MCF 10A (cell line): ENCODE measurements at regions of chr5 and their contacts with region 1.

Region 1: DNA sequence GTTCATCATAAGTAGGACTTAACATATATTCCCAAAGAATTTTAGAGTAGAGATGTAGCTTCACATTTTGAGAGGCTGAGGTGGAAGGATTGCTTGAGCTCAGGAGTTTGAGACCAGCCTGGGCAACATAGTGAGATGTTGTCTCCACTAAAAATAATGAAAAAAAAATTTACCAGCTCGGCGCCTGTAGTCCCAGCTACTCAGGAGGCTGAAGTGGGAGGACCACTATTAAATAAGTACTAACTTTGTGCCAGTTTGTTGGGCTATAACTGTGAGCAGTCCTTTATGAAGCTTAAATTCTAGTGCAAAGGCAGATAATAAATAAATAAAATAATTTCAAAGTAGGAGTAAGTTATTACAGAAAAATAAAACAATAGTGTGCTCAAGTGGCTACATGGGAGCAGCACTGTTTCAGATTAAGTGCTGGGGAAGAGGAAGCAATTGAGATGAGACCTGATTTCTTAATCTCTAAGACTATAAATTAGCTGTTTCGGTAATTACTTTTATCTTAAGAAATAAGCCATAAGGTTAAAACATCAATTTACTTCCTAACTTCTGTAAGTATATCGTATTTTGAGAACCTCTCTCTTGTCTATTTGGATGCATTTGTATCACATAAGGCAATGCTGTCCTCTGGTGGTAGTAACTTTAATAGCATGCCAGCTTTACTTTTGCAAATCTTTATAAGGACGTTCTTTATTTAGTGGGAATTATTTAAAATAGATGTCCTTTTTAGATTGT is 98.9 kb downstream of the CSNK1G3 start:
- DNase-seq: peak; percentile 76
- H3K4me3 Mint-ChIP-seq: no peak overlapping the region
- H3K27ac Mint-ChIP-seq: no peak overlapping the region
- H3K4me1 Mint-ChIP-seq: no peaks in the 10 kb centered on the region
- H3K27me3 Mint-ChIP-seq: no peaks in the 10 kb centered on the region
- CTCF ChIP-seq: peak; percentile 96

Region 2: DNA sequence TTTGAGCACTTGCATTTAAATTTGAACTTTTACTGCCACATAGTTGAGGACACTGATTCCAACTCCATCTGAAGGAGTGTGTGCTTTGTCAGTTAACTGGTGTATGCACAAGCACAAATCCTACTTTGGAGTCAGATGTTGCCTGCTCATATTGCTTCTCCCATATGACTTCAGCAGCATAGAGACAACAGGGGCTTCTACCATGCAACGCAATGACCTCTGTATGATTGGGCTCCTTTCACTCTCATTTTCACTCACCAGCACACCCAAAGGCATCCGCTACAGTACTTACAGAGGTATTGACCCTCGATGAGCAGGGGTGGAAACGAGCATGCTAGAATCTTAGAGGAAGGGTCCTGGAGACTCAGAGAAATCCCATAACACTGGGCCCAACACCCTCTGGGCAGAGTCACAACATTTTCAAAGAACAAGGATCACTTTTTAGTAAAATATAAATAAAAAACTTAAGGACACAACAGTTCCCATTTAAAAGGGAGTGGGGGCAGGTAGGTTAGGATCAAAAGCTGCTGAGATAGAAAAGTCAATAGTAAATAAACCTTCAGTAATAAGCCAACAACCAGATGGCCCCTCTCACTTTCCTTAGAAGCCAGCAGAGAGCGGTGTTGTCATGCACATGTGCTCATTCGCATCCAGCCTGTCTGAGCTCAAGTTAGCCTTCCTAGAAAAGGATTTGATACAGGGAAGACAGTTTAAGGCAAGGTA is 1095.0 kb before region 1 on chr5:
- CTCF ChIA-PET with region 1: interaction called, 4 read pairs
- POLR2A ChIA-PET with region 1: interaction called, 3 read pairs
- intact Hi-C with region 1: loop called (anchors 2 kb)
- DNase-seq: peak; percentile 89
- H3K4me3 Mint-ChIP-seq: no peak overlapping the region
- H3K27ac Mint-ChIP-seq: no peak overlapping the region
- H3K4me1 Mint-ChIP-seq: no peaks in the 10 kb centered on the region
- H3K27me3 Mint-ChIP-seq: no peaks in the 10 kb centered on the region
- CTCF ChIP-seq: peak; percentile 94

Region 3: GRCh38 chr5:123412206-123412605 is 198.6 kb before region 1 on chr5:
- CTCF ChIA-PET with region 1: interaction called, 12 read pairs
- POLR2A ChIA-PET with region 1: no interaction called
- intact Hi-C with region 1: no loop called
- DNase-seq: no peak
- H3K4me3 Mint-ChIP-seq: no peak overlapping the region
- H3K27ac Mint-ChIP-seq: no peak overlapping the region
- H3K4me1 Mint-ChIP-seq: peaks cover 6% of the 10 kb centered on the region
- H3K27me3 Mint-ChIP-seq: no peaks in the 10 kb centered on the region
- CTCF ChIP-seq: no peak

Region 4: DNA sequence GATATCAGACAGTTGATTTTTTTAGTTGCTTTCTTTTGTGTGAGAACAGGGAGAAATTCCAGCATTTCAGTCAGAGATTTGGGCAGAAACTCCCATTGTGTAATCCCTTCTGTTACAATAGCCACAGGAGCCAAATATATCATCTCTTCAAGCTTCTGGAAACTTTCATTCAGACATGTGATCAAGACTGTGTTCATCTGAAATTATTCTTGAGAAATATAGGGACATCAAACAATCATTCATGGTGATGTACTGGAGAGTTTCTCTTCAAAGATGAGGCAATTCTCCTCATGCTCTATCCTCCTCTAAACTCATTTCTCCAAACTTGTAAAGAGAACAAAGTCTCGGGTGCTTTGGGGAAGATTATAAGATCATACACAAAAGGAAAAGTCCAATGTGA is 134.1 kb before region 1 on chr5:
- CTCF ChIA-PET with region 1: no interaction called
- POLR2A ChIA-PET with region 1: no interaction called
- intact Hi-C with region 1: no loop called
- DNase-seq: peak; percentile 41
- H3K4me3 Mint-ChIP-seq: no peak overlapping the region
- H3K27ac Mint-ChIP-seq: no peak overlapping the region
- H3K4me1 Mint-ChIP-seq: peaks cover 21% of the 10 kb centered on the region
- H3K27me3 Mint-ChIP-seq: no peaks in the 10 kb centered on the region
- CTCF ChIP-seq: no peak

Region 5: GRCh38 chr5:123594434-123594833 is 16.4 kb before region 1 on chr5:
- CTCF ChIA-PET with region 1: interaction called, 11 read pairs
- POLR2A ChIA-PET with region 1: interaction called, 9 read pairs
- intact Hi-C with region 1: no loop called
- DNase-seq: no peak
- H3K4me3 Mint-ChIP-seq: no peak overlapping the region
- H3K27ac Mint-ChIP-seq: no peak overlapping the region
- H3K4me1 Mint-ChIP-seq: peaks cover 12% of the 10 kb centered on the region
- H3K27me3 Mint-ChIP-seq: no peaks in the 10 kb centered on the region
- CTCF ChIP-seq: no peak